Panc1 (cell line): ENCODE measurements at regions of chr6 and their contacts with region 1.

Region 1: DNA sequence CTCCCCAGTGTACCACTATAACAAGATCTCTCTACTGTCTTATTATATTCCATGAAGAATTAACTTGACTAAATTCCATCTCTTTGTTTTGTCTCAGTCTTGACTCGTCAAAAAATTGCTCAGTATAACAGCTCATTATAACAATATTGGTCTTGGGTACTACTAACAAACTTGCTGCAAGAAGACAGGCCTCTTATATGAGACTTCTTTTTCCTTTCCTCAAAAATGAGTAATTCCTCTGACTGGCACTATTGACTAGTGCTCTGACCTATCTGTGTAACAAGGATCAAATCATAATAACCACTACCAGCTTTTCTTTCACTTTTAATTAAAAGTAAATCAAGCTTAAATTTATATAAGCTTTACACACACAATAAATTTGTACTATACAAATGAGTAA is 91.3 kb upstream of the THEMIS start:
- DNase-seq: no peak
- ATAC-seq: no peak
- H3K4me3 ChIP-seq: no peak overlapping the region
- H3K27ac ChIP-seq: no peak overlapping the region
- H3K4me1 ChIP-seq: no peaks in the 10 kb centered on the region
- H3K27me3 ChIP-seq: no peaks in the 10 kb centered on the region
- CTCF ChIP-seq: no peak

Region 2: DNA sequence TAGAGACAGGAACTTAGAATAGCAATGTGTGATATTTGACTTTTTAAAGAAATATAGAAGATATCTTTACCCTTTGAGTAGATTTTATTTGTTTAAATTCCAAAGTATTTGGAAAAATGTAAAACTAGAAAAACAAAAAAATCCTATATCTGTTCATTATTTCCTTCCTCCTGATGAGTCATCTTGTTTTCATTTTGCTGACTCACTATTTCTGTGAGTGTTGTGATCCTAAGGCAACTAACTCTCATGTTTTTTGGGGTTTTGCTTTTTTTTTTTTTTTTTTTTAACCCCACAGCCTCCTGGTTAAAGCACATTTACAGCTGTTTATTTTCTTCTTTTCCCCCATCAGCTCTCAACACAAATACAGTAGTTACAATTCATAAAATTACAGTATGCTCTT is 53.4 kb before region 1 on chr6:
- CTCF ChIA-PET with region 1: no interaction called
- POLR2A ChIA-PET with region 1: interaction called, 10 read pairs
- in situ Hi-C with region 1: no loop called
- intact Hi-C with region 1: no loop called
- DNase-seq: no peak
- ATAC-seq: no peak
- H3K4me3 ChIP-seq: no peak overlapping the region
- H3K27ac ChIP-seq: no peak overlapping the region
- H3K4me1 ChIP-seq: no peaks in the 10 kb centered on the region
- H3K27me3 ChIP-seq: no peaks in the 10 kb centered on the region
- CTCF ChIP-seq: no peak